ENCODE measurements at regions of chr22 and their contacts with region 1.

Region 1: DNA sequence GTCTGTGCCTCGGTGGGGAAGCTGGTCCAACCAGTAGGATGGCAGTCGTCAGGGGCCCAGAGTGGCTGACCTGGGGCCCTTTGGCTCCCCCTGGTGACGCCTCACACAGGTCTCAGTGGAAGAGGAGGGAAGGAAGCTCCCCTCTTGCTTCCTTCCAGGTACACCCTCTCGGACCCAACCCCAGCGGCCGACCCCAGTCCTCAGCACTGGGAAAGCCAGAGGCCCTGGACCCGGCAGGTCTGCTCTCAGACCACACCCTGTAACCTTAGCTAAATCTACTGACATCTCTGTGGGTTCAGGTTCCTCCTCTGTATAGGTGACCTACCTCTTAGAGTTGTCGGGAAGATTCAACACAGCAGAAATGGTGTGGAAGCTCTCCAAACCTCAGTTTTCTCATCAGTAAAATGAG is 3.4 kb upstream of the SCUBE1 start:
- DNase-seq: peak; percentile 83
- H3K4me3 Mint-ChIP-seq: no peak overlapping the region
- H3K27ac Mint-ChIP-seq: no peak overlapping the region
- H3K4me1 Mint-ChIP-seq: no peaks in the 10 kb centered on the region
- H3K27me3 Mint-ChIP-seq: peaks cover 59% of the 10 kb centered on the region
- CTCF ChIP-seq: peak; percentile 95

Region 2: GRCh38 chr22:42294034-42294985 is 1052.2 kb before region 1 on chr22:
- CTCF ChIA-PET with region 1: no interaction called
- intact Hi-C with region 1: no loop called
- DNase-seq: peak; percentile 73
- H3K4me3 Mint-ChIP-seq: no peak overlapping the region
- H3K27ac Mint-ChIP-seq: no peak overlapping the region
- H3K4me1 Mint-ChIP-seq: no peaks in the 10 kb centered on the region
- H3K27me3 Mint-ChIP-seq: peaks cover 18% of the 10 kb centered on the region
- CTCF ChIP-seq: no peak

Region 3: GRCh38 chr22:43187171-43188099 is 159.1 kb before region 1 on chr22:
- CTCF ChIA-PET with region 1: interaction called, 12 read pairs
- intact Hi-C with region 1: no loop called
- DNase-seq: peak; percentile 98
- H3K4me3 Mint-ChIP-seq: peak overlapping the region; percentile 73
- H3K27ac Mint-ChIP-seq: peak overlapping the region; percentile 87
- H3K4me1 Mint-ChIP-seq: peaks cover 27% of the 10 kb centered on the region
- H3K27me3 Mint-ChIP-seq: no peaks in the 10 kb centered on the region
- CTCF ChIP-seq: peak; percentile 60

Region 4: DNA sequence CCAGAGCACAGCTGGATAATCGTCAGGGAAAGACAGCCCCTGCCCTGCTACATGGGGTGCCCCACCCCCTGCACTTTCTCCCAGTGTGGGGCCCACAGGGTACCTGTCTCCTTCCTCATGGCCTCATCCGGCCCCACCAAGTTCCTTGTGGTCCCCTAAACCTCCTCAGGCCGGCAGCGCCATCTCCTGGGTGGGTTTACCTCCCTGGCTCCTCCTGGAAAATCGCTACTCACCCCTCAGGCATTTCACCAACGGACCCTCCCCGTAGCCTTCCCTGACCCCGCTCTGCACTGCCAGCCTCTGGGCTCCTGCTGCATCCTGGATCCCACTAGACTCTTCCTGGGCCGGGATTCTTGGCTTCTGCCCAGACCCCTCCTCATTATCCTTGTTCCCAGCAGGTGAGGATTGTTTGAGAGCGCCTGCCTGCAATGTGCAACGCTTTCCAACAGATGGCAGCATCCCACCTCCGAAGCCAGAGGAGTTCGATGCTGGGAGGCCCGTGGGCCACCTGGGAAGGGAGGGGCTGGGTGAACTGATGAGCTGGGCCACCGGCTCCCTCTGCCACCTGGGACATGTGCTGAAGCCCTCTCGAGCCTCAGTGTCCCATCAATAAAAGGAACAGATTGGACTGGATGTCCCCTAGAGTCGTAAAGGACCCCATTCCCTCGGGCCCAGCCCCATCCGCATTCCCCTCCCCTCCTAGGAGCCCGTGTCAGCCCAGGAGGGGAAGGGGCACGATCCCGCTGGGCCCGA is 115.4 kb before region 1 on chr22:
- CTCF ChIA-PET with region 1: interaction called, 33 read pairs
- intact Hi-C with region 1: loop called (anchors 1 kb)
- DNase-seq: peak; percentile 81
- H3K4me3 Mint-ChIP-seq: peak overlapping the region; percentile 33
- H3K27ac Mint-ChIP-seq: peak overlapping the region; percentile 9
- H3K4me1 Mint-ChIP-seq: peaks cover 18% of the 10 kb centered on the region
- H3K27me3 Mint-ChIP-seq: peaks cover 65% of the 10 kb centered on the region
- CTCF ChIP-seq: peak; percentile 97

Region 5: GRCh38 chr22:43273902-43274484 is 72.5 kb before region 1 on chr22:
- CTCF ChIA-PET with region 1: interaction called, 63 read pairs
- intact Hi-C with region 1: loop called (anchors 1 kb)
- DNase-seq: peak; percentile 69
- H3K4me3 Mint-ChIP-seq: no peak overlapping the region
- H3K27ac Mint-ChIP-seq: peak overlapping the region; percentile 37
- H3K4me1 Mint-ChIP-seq: peaks cover 21% of the 10 kb centered on the region
- H3K27me3 Mint-ChIP-seq: peaks cover 34% of the 10 kb centered on the region
- CTCF ChIP-seq: peak; percentile 88

Measured in Calu3 (cell line).